Mammary epithelial cell (primary cell): ENCODE measurements at regions of chr17 and their contacts with region 1.

Region 1: GRCh38 chr17:20797292-20797691 is 217.8 kb downstream of the CDRT15L2 start:
- DNase-seq: no peak
- H3K4me3 ChIP-seq: no peak overlapping the region
- H3K27ac ChIP-seq: no peak overlapping the region
- H3K4me1 ChIP-seq: no peaks in the 10 kb centered on the region
- H3K27me3 ChIP-seq: no peaks in the 10 kb centered on the region
- CTCF ChIP-seq: no peak

Region 2: GRCh38 chr17:20852239-20852989 is 55.1 kb after region 1 on chr17:
- CTCF ChIA-PET with region 1: no interaction called
- dilution Hi-C with region 1: no loop called
- in situ Hi-C with region 1: no loop called
- intact Hi-C with region 1: loop called (anchors 2 kb)
- DNase-seq: peak; percentile 38
- H3K4me3 ChIP-seq: peak overlapping the region; percentile 11 to 37 (median 13)
- H3K27ac ChIP-seq: no peak overlapping the region
- H3K4me1 ChIP-seq: peaks cover 12% of the 10 kb centered on the region
- H3K27me3 ChIP-seq: peaks cover 8% of the 10 kb centered on the region
- CTCF ChIP-seq: no peak

Region 3: GRCh38 chr17:21098934-21099689 is 301.8 kb after region 1 on chr17:
- CTCF ChIA-PET with region 1: no interaction called
- dilution Hi-C with region 1: no loop called
- in situ Hi-C with region 1: no loop called
- intact Hi-C with region 1: loop called (anchors 2 kb)
- DNase-seq: peak; percentile 87
- H3K4me3 ChIP-seq: peak overlapping the region; percentile 53 to 65 (median 64)
- H3K27ac ChIP-seq: peak overlapping the region; percentile 84
- H3K4me1 ChIP-seq: no peaks in the 10 kb centered on the region
- H3K27me3 ChIP-seq: no peaks in the 10 kb centered on the region
- CTCF ChIP-seq: no peak

Region 4: GRCh38 chr17:21539146-21539545 is 741.9 kb after region 1 on chr17:
- CTCF ChIA-PET with region 1: no interaction called
- dilution Hi-C with region 1: no loop called
- in situ Hi-C with region 1: no loop called
- intact Hi-C with region 1: loop called (anchors 10 kb)
- DNase-seq: peak; percentile 62
- H3K4me3 ChIP-seq: no peak overlapping the region
- H3K27ac ChIP-seq: no peak overlapping the region
- H3K4me1 ChIP-seq: no peaks in the 10 kb centered on the region
- H3K27me3 ChIP-seq: no peaks in the 10 kb centered on the region
- CTCF ChIP-seq: no peak